Activated B cell treated with CpG ODN at 0.5 μM for 24 hours (primary cell): ENCODE measurements at regions of chr3 and their contacts with region 1.

Region 1: DNA sequence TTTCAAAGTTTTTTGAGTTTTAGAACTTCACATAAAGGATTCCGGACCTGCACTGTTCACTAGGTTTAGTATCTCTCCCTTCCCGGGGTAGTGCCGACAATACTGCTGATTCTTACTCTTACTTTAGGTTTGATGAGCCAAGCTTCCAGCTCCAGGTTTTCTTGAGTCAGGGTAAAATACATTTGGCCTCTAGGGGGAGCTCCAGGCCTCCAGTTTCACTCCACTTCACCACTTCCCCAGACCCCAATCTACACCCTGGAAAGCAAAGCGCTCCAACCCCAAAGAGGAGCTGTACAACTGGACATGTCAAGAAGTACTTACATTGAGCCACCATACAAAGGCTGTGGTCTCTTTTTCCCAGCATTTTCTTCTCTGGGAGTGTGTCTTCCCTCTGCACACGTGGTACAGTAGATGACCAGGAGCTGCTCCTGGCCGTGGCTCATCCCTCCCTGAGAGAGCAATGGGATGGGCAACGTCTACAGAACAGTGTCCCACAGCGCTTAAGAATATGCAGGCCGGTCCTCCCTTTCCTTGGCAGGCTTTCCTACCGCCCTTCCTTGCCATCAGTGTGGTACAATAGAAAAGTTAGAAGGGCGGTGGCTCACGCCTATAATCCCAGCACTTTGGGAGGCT is 93.9 kb upstream of the CCDC80 start:
- DNase-seq: peak; percentile 46
- ATAC-seq: peak; percentile 81
- H3K4me3 Mint-ChIP-seq: no peak overlapping the region
- H3K27ac Mint-ChIP-seq: no peak overlapping the region
- H3K4me1 Mint-ChIP-seq: peaks cover 28% of the 10 kb centered on the region
- H3K27me3 Mint-ChIP-seq: no peaks in the 10 kb centered on the region
- CTCF ChIP-seq: no peak

Region 2: DNA sequence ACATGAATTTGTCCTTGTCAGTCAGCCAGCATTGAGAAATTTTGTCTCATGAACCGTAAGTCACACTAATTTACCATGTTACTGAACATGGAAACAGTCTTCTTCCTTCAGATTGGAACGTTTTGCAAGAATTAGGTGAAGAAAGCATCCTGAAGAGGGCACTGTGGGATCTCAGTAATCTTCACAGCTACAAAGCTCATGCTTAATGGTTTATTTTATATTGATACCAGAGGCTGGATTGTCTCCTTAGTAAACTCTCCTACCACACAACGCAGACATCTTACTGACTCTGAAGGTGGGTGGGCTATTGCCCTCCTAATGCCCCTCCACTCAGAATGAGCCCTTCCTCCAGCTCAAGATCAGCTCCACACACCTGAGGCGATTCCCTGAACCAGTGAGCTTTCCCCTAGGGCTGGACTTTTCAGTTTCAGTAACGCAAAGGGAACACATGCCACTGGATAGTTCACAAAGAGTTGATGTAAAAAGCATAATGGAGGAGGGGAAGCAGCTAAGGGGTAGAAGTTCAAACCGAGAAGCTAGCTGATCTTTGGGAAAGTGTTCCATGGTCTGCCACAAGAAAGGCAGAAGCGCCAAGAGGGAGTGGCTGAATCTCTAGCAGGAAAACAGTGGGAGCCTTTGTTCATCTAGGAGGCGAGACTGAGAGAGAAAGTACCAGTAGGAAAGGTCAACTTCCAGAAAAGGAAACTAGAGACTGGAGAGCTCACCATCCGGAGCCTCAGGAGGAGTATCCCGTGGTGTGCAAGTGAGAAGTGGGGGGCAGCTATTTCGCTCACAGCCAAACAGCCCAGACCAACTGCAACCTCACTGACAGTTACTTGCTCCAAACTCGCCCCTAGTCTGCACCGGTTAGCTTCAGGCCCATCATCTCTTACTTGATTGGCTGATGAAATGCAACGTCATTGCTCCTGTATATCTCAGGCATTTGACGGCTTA is 441.2 kb before region 1 on chr3 and contains the start of gene SLC9C1:
- CTCF ChIA-PET with region 1: interaction called, 3 read pairs
- POLR2A ChIA-PET with region 1: no interaction called
- intact Hi-C with region 1: loop called (anchors 5 kb)
- DNase-seq: peak; percentile 18
- ATAC-seq: peak; percentile 75
- H3K4me3 Mint-ChIP-seq: peak within 1 kb of the TSS; percentile 83
- H3K27ac Mint-ChIP-seq: peak within 1 kb of the TSS; percentile 88
- H3K4me1 Mint-ChIP-seq: peaks cover 37% of the 10 kb centered on the region
- H3K27me3 Mint-ChIP-seq: no peaks in the 10 kb centered on the region
- CTCF ChIP-seq: no peak
- total RNA-seq, gene SLC9C1: 0.24 and 0.58 TPM in 2 replicates

Region 3: GRCh38 chr3:112676659-112677234 is 58.1 kb before region 1 on chr3:
- CTCF ChIA-PET with region 1: interaction called, 3 read pairs
- POLR2A ChIA-PET with region 1: interaction called, 3 read pairs
- intact Hi-C with region 1: loop called (anchors 5 kb)
- DNase-seq: peak; percentile 57
- ATAC-seq: peak; percentile 98
- H3K4me3 Mint-ChIP-seq: peak overlapping the region; percentile 67
- H3K27ac Mint-ChIP-seq: peak overlapping the region; percentile 84
- H3K4me1 Mint-ChIP-seq: peaks cover 25% of the 10 kb centered on the region
- H3K27me3 Mint-ChIP-seq: peaks cover 8% of the 10 kb centered on the region
- CTCF ChIP-seq: no peak

Region 4: DNA sequence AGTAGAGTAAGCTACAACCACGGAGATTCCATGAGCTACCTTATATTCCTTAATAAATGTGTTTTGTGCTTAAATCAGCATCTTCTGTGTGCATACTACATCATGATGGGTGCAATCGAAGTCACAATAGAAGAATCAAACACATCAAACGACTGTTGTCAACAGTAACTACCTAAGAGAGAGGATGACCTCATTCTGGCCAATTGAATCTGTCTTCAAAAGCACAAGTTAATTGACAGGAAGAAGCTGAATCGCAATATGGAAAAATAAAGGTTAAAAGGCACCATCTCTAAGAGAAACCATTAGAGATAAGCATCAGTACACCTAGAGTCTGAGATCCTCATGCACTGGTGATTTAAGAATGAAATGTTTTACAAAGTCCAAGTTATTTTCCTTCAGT is 72.9 kb after region 1 on chr3:
- CTCF ChIA-PET with region 1: no interaction called
- POLR2A ChIA-PET with region 1: no interaction called
- intact Hi-C with region 1: no loop called
- DNase-seq: no peak
- ATAC-seq: no peak
- H3K4me3 Mint-ChIP-seq: no peak overlapping the region
- H3K27ac Mint-ChIP-seq: no peak overlapping the region
- H3K4me1 Mint-ChIP-seq: peaks cover 17% of the 10 kb centered on the region
- H3K27me3 Mint-ChIP-seq: no peaks in the 10 kb centered on the region
- CTCF ChIP-seq: no peak

Region 5: DNA sequence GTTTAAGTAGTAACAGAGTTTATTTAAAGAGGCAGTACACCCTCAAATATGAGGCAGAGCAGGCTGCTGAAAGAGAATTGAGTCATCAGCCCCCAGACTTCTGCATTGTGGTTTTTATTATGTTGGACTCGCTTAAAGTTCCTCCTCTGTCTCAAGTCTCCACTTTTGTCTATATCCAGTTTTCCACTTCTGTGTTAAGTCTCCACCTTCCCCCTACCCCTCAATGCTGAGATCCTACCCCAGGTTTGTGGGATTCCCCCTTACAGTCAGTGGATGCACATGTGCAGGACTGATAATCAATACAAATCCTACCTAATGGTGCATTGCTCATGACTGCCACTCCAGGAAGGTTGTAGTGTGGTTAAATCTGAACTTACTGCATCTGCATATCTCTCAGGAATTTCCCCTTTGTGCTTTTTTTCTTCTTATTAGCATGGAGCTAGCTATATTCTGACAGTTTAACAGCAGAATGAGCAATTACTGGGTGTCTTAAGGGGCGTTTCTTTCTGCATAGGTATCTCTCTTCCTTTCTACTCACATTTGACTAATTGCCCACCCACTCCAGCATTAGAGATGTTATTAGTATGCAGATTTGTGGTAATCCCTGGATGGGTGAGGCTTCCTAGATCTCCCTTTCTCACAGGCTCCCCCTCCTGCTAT is 123.7 kb after region 1 on chr3:
- CTCF ChIA-PET with region 1: interaction called, 3 read pairs
- POLR2A ChIA-PET with region 1: no interaction called
- intact Hi-C with region 1: loop called (anchors 2 kb)
- DNase-seq: peak; percentile 32
- ATAC-seq: peak; percentile 76
- H3K4me3 Mint-ChIP-seq: peak overlapping the region; percentile 69
- H3K27ac Mint-ChIP-seq: peak overlapping the region; percentile 89
- H3K4me1 Mint-ChIP-seq: peaks cover 45% of the 10 kb centered on the region
- H3K27me3 Mint-ChIP-seq: no peaks in the 10 kb centered on the region
- CTCF ChIP-seq: no peak

Region 6: GRCh38 chr3:112984485-112984884 is 249.7 kb after region 1 on chr3:
- CTCF ChIA-PET with region 1: interaction called, 159 read pairs
- POLR2A ChIA-PET with region 1: interaction called, 6 read pairs
- intact Hi-C with region 1: loop called (anchors 1 kb)
- DNase-seq: no peak
- ATAC-seq: no peak
- H3K4me3 Mint-ChIP-seq: no peak overlapping the region
- H3K27ac Mint-ChIP-seq: peak overlapping the region; percentile 16
- H3K4me1 Mint-ChIP-seq: peaks cover 44% of the 10 kb centered on the region
- H3K27me3 Mint-ChIP-seq: no peaks in the 10 kb centered on the region
- CTCF ChIP-seq: no peak

Region 7: GRCh38 chr3:113035387-113035982 is 300.7 kb after region 1 on chr3:
- CTCF ChIA-PET with region 1: interaction called, 43 read pairs
- POLR2A ChIA-PET with region 1: no interaction called
- intact Hi-C with region 1: loop called (anchors 1 kb)
- DNase-seq: no peak
- ATAC-seq: peak; percentile 88
- H3K4me3 Mint-ChIP-seq: no peak overlapping the region
- H3K27ac Mint-ChIP-seq: no peak overlapping the region
- H3K4me1 Mint-ChIP-seq: no peaks in the 10 kb centered on the region
- H3K27me3 Mint-ChIP-seq: no peaks in the 10 kb centered on the region
- CTCF ChIP-seq: no peak